Activated B cell treated with CpG ODN at 0.5 μM for 24 hours (primary cell): ENCODE measurements at regions of chr17 and their contacts with region 1.

Region 1: DNA sequence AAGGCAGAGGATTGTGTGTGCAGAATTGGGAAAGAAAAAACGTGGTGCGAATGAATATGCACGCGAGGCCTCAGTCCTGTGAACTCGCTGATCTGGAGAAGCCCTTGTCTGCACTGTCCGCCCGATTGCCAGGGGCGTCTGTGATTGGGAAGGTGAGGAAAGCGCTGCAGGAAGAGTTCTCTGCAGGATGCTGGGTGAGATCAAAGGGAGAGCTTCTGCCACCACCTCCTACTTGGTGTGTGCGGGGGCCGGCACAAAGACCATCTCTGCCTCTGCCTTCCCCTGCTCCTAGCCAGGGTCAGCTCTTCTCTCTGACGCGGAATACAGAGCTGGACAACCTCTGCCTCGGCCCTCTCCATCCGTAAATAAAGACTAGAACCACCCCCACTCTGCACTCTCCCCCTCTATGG is 852 bp upstream of the RAB5C start:
- DNase-seq: no peak
- ATAC-seq: no peak
- H3K4me3 Mint-ChIP-seq: peak overlapping the region; percentile 95
- H3K27ac Mint-ChIP-seq: peak overlapping the region; percentile 92
- H3K4me1 Mint-ChIP-seq: peaks cover 37% of the 10 kb centered on the region
- H3K27me3 Mint-ChIP-seq: no peaks in the 10 kb centered on the region
- CTCF ChIP-seq: no peak

Region 2: GRCh38 chr17:41918314-41919164 is 237.1 kb before region 1 on chr17 and contains the start of gene ACLY:
- CTCF ChIA-PET with region 1: no interaction called
- POLR2A ChIA-PET with region 1: no interaction called
- intact Hi-C with region 1: loop called (anchors 1 kb)
- DNase-seq: peak; percentile 96
- ATAC-seq: peak; percentile 99
- H3K4me3 Mint-ChIP-seq: peak within 1 kb of the TSS; percentile 92
- H3K27ac Mint-ChIP-seq: peak within 1 kb of the TSS; percentile 84
- H3K4me1 Mint-ChIP-seq: peaks cover 31% of the 10 kb centered on the region
- H3K27me3 Mint-ChIP-seq: no peaks in the 10 kb centered on the region
- CTCF ChIP-seq: no peak
- total RNA-seq, gene ACLY: 133 and 143 TPM in 2 replicates

Region 3: DNA sequence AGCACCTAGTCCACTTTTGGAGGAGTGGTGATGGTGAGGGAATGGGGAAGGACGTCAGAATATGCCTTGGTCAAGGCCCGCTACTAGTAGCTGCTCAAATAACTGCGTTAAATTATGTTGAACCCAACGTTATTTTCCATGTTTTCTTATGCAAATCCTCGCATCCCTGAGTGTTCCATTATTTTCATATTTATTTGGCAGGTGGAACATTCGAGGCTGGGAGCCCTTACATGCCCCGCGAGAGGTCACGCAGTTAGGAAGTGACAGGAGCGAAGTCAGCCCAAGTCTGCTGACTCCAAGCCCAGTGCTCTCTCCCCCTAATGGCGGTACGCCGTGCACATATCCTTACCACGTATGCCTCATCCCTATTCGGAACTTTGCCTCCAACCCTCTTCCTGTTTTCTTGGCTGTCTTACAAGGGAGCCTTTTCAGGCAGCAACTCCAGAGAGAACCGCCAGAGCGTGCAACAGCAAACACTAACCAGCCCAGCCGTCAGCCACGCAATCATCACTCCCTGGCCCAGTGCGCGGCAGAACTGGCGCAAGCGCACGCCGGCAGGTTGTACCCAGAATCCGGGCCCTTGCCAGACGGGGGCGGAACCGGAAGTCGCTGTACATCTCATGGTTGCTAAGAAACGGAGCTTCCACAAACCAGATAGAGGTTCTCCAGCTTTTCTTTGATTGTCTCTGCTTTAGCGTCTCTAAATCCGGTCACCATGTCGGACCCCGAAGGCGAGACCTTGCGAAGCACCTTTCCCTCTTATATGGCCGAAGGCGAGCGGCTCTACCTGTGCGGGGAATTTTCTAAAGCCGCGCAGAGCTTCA is 225.4 kb before region 1 on chr17 and contains the start of gene ODAD4:
- CTCF ChIA-PET with region 1: no interaction called
- POLR2A ChIA-PET with region 1: no interaction called
- intact Hi-C with region 1: loop called (anchors 1 kb)
- DNase-seq: peak; percentile 89
- ATAC-seq: peak; percentile 98
- H3K4me3 Mint-ChIP-seq: peak within 1 kb of the TSS; percentile 94
- H3K27ac Mint-ChIP-seq: peak within 1 kb of the TSS; percentile 97
- H3K4me1 Mint-ChIP-seq: peaks cover 38% of the 10 kb centered on the region
- H3K27me3 Mint-ChIP-seq: no peaks in the 10 kb centered on the region
- CTCF ChIP-seq: no peak
- total RNA-seq, gene ODAD4: 0.56 and 1.1 TPM in 2 replicates

Region 4: DNA sequence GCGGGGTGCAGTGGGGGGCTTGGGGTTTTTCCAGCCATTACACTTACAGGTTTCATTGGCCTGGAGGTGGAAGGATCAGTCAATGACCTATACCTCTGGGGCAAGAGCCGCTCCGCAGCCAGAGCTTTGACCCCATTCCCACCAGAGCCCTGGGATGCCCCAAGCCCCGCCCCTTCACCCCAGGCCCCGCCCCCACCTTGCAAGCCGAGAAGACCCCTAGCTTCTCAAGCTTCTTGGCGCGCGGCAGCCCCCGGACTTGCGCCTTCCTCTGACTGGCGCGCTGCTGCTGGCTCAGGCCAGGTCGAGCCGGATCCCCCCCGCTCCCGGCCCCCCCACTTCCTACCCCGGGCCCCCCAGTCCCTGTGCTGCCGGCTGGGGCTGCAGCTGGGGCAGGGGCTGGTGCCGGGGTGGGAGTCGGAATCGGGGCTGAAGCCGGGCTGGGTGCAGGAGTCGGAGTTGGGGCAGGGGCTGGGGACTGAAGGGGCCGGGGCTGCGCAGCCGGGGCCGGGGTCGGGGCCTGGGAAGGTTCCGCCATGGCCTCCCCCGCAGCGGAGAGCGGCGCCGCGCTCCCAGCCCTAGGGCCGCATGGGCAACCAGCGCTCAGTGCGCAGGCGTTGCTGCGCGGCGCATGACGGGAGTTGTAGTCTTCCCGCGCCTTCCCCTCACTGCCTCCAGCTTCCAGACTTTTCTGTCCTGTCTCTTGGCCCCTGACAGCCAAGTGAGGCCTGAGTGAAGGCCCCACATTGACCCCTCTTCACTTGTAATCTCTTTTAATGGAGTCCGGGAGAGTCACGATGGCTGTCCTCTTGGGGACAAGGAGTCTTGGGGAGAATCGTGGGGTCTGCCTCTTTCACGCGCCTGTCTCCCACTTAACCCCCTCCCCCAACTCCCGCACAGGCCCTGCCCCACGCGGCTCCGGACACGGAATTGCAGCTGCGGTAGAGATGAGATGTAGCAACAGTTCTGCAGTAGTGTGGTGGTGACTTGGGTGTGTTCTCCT is 34.6 kb before region 1 on chr17 and contains the start of gene KAT2A:
- CTCF ChIA-PET with region 1: no interaction called
- POLR2A ChIA-PET with region 1: interaction called, 4 read pairs
- intact Hi-C with region 1: loop called (anchors 1 kb)
- DNase-seq: peak; percentile 76
- ATAC-seq: peak; percentile 89
- H3K4me3 Mint-ChIP-seq: peak within 1 kb of the TSS; percentile 71
- H3K27ac Mint-ChIP-seq: peak within 1 kb of the TSS; percentile 30
- H3K4me1 Mint-ChIP-seq: peaks cover 32% of the 10 kb centered on the region
- H3K27me3 Mint-ChIP-seq: no peaks in the 10 kb centered on the region
- CTCF ChIP-seq: no peak
- total RNA-seq, gene KAT2A: 33.4 and 40.1 TPM in 2 replicates

Region 5: GRCh38 chr17:42193969-42194899 is 38.6 kb after region 1 on chr17 and contains the start of gene GHDC:
- CTCF ChIA-PET with region 1: no interaction called
- POLR2A ChIA-PET with region 1: interaction called, 3 read pairs
- intact Hi-C with region 1: loop called (anchors 1 kb)
- DNase-seq: peak; percentile 74
- ATAC-seq: peak; percentile 90
- H3K4me3 Mint-ChIP-seq: peak within 1 kb of the TSS; percentile 98
- H3K27ac Mint-ChIP-seq: peak within 1 kb of the TSS; percentile 96
- H3K4me1 Mint-ChIP-seq: peaks cover 33% of the 10 kb centered on the region
- H3K27me3 Mint-ChIP-seq: no peaks in the 10 kb centered on the region
- CTCF ChIP-seq: no peak
- total RNA-seq, gene GHDC: 26.5 and 29.1 TPM in 2 replicates